ENCODE measurements at regions of chr11 and their contacts with region 1.

Region 1: GRCh38 chr11:63838678-63839507 is at the start of gene MARK2:
- DNase-seq: peak; percentile 98 to 100 (median 100)
- ATAC-seq: peak; percentile 88
- H3K4me3 ChIP-seq: peak within 1 kb of the TSS; percentile 81
- H3K4me1 ChIP-seq: peaks cover 42% of the 10 kb centered on the region
- CTCF ChIP-seq: no peak
- total RNA-seq, gene MARK2: 71.9 to 111 (median 94.5) TPM

Region 2: GRCh38 chr11:63179432-63180041 is 659.4 kb before region 1 on chr11:
- intact Hi-C with region 1: no loop called
- DNase-seq: no peak
- ATAC-seq: no peak
- H3K4me3 ChIP-seq: no peak overlapping the region
- H3K4me1 ChIP-seq: no peaks in the 10 kb centered on the region
- CTCF ChIP-seq: no peak

Region 3: DNA sequence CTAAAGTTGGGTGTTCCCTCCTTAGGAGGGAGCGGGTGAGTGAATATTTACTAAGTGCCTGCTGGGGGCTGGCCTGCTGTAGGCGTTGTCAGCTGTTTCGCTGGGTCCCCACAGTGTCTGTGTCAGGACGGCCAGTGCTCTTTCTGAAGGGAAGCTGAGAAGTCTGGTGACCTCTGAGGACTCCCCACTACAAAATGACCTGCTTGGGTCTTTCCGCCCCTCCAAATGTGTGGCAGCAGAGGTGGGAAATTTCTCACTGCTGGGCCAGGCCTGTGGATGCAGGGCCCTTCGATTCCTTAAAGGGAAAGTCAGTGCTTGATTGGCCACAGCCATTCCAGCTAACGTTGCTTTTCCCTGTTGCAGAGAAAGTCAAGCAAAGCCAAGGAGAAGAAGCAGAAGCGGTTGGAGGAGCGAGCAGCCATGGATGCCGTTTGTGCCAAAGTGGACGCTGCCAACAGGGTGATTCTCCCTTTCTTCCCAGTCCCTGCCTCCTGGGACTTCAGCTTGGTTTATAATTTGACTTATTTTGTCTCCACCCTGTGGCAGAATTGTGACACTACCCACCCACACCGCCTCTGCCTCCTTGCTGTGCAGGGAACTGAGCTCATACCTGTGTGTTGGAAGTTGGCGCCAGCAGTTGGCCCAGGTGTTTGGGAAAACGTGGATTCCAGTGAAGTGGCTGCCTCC is 106.7 kb after region 1 on chr11:
- intact Hi-C with region 1: loop called (anchors 2 to 5 kb)
- DNase-seq: peak in 2 of 3 donors; percentile 70 to 82
- ATAC-seq: peak; percentile 92
- H3K4me3 ChIP-seq: no peak overlapping the region
- H3K4me1 ChIP-seq: peaks cover 10% of the 10 kb centered on the region
- CTCF ChIP-seq: peak; percentile 40